Activated CD4-positive, alpha-beta memory T cell treated with anti-CD3 and anti-CD28 coated beads for 36 hours (primary cell): ENCODE measurements at regions of chr2 and their contacts with region 1.

Region 1: DNA sequence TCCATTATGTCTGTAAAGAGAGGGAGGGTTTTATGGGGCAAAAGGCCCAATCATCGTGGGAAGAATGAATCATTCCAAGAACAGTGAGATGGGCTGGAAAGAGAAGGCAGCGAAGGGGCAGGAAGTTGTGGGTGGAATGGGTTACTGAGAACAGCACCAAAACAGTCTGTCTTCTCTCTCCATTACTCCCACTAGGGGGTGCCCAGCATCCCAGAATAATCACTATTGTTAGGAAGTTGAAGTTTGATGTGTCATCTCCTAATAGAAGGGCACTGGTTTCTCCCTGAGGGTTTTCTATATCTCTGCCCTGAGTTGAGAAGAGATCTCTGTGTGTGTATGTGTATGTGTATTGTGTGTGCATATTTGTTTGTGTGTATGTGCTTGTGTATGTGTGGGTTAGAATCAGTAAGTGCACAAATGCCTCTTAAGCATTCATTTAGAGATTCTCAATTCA is 76.6 kb upstream of the MAP4K3 start:
- DNase-seq: peak; percentile 85
- H3K4me3 Mint-ChIP-seq: peak overlapping the region; percentile 0
- H3K27ac Mint-ChIP-seq: peak overlapping the region; percentile 70
- H3K4me1 Mint-ChIP-seq: peaks cover 31% of the 10 kb centered on the region
- H3K27me3 Mint-ChIP-seq: peaks cover 7% of the 10 kb centered on the region

Region 2: GRCh38 chr2:38907743-38908562 is 605.7 kb before region 1 on chr2:
- CTCF ChIA-PET with region 1: no interaction called
- POLR2A ChIA-PET with region 1: no interaction called
- intact Hi-C with region 1: loop called (anchors 2 kb)
- DNase-seq: peak; percentile 30
- H3K4me3 Mint-ChIP-seq: no peak overlapping the region
- H3K27ac Mint-ChIP-seq: peak overlapping the region; percentile 35
- H3K4me1 Mint-ChIP-seq: peaks cover 15% of the 10 kb centered on the region
- H3K27me3 Mint-ChIP-seq: no peaks in the 10 kb centered on the region

Region 3: DNA sequence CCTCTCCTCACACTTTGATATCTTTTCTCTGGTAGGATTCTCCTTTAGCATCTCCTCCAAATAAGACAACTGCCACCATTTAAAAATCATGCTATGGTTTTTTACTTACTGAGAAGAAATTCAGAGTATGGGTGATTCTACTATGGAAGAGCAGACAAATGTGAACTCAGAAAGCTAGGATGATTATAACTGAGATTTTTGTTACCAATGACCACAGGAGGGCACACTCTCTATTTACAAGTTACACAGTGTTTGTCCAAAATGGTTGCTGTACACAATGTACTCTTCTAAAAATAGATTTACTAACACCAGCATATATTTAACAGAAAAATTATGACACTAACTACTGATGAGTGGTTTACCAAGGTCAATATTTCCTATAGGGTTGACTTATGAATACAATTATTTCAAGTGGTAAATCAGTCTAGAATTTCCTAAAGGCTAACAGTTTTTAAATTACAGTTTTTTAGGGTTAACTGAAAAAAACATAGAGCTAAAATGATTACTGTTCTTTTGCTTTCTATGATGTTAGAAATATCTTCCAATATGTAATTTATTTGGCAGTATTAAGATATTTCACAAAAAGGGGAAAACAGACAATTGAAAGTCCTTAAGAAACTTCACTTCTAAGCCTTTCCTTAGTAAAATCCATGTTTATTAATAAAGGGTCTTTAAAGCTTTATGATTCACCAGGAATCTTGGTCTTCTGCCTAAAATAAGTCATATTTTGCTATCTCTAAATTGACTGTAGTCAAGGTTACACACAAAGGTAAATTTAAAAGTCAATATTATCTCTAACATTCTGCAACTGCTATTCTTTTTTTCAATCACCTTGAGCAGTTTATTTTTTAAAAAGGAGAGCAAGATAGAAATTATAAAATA is 133.8 kb before region 1 on chr2:
- CTCF ChIA-PET with region 1: interaction called, 5 read pairs
- POLR2A ChIA-PET with region 1: no interaction called
- intact Hi-C with region 1: loop called (anchors 1 kb)
- DNase-seq: no peak
- H3K4me3 Mint-ChIP-seq: no peak overlapping the region
- H3K27ac Mint-ChIP-seq: no peak overlapping the region
- H3K4me1 Mint-ChIP-seq: peaks cover 19% of the 10 kb centered on the region
- H3K27me3 Mint-ChIP-seq: no peaks in the 10 kb centered on the region

Region 4: DNA sequence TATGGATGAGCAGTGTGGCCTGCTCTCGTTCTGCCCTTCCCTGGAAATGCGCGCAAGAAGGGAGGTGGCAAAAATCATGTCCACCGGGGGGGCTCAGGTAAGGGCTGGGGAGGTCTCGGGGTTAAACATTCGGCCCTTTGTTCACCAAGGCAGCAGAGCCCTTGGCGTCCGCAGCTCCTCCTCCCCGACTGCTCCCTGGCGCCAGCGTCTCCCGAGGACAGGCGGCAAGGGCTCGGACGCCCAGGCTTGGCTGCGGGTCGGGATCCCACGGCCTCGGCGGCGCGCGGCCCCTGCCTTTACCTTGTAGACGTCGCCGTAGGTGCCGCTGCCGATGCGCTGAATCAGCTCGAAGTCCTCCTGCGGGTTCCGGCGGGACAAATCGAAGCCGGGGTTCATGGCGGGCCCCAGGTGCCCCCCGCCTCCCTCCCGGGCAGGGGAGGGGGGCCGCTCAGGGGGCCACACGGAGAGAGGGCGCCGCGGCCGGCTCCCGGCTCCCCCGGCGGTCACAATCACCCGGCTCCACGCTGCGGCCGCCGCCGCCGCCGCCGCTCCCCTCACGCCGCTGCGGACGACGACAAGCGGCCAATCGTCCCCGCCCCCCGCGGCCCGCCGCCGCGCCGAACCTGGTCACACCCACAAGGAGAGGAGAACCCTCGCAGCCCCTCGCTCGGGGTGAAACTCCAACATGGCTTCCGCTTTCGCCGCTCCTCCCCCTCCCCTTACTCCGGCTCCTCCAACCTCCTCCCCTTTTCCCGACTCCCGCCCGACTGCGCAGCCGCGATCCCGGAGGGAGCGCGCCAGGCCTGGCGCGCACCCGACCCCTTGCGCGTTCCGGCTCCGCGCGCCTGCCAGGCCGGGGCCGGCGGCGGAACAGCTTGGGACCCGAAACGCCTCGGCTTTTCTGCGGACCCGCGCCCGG is 76.8 kb before region 1 on chr2 and contains the start of gene MAP4K3:
- CTCF ChIA-PET with region 1: interaction called, 5 read pairs
- POLR2A ChIA-PET with region 1: interaction called, 6 read pairs
- intact Hi-C with region 1: loop called (anchors 1 kb)
- DNase-seq: peak; percentile 87
- H3K4me3 Mint-ChIP-seq: peak within 1 kb of the TSS; percentile 84
- H3K27ac Mint-ChIP-seq: peak within 1 kb of the TSS; percentile 82
- H3K4me1 Mint-ChIP-seq: peaks cover 65% of the 10 kb centered on the region
- H3K27me3 Mint-ChIP-seq: no peaks in the 10 kb centered on the region
- total RNA-seq, gene MAP4K3: 9.9 to 10.1 TPM

Region 5: GRCh38 chr2:39492095-39492590 is 21.5 kb before region 1 on chr2:
- CTCF ChIA-PET with region 1: interaction called, 5 read pairs
- POLR2A ChIA-PET with region 1: interaction called, 5 read pairs
- intact Hi-C with region 1: loop called (anchors 1 kb)
- DNase-seq: peak; percentile 33
- H3K4me3 Mint-ChIP-seq: no peak overlapping the region
- H3K27ac Mint-ChIP-seq: no peak overlapping the region
- H3K4me1 Mint-ChIP-seq: peaks cover 41% of the 10 kb centered on the region
- H3K27me3 Mint-ChIP-seq: peaks cover 7% of the 10 kb centered on the region

Region 6: GRCh38 chr2:39503277-39503676 is 10.4 kb before region 1 on chr2:
- CTCF ChIA-PET with region 1: no interaction called
- POLR2A ChIA-PET with region 1: no interaction called
- intact Hi-C with region 1: no loop called
- DNase-seq: no peak
- H3K4me3 Mint-ChIP-seq: no peak overlapping the region
- H3K27ac Mint-ChIP-seq: no peak overlapping the region
- H3K4me1 Mint-ChIP-seq: no peaks in the 10 kb centered on the region
- H3K27me3 Mint-ChIP-seq: peaks cover 11% of the 10 kb centered on the region

Region 7: GRCh38 chr2:39640107-39640506 is 126.4 kb after region 1 on chr2:
- CTCF ChIA-PET with region 1: no interaction called
- POLR2A ChIA-PET with region 1: no interaction called
- intact Hi-C with region 1: loop called (anchors 2 kb)
- DNase-seq: no peak
- H3K4me3 Mint-ChIP-seq: no peak overlapping the region
- H3K27ac Mint-ChIP-seq: no peak overlapping the region
- H3K4me1 Mint-ChIP-seq: no peaks in the 10 kb centered on the region
- H3K27me3 Mint-ChIP-seq: peaks cover 3% of the 10 kb centered on the region

Region 8: GRCh38 chr2:39772086-39772811 is 258.6 kb after region 1 on chr2:
- CTCF ChIA-PET with region 1: no interaction called
- POLR2A ChIA-PET with region 1: no interaction called
- intact Hi-C with region 1: loop called (anchors 2 kb)
- DNase-seq: no peak
- H3K4me3 Mint-ChIP-seq: no peak overlapping the region
- H3K27ac Mint-ChIP-seq: no peak overlapping the region
- H3K4me1 Mint-ChIP-seq: peaks cover 45% of the 10 kb centered on the region
- H3K27me3 Mint-ChIP-seq: no peaks in the 10 kb centered on the region